Gastrocnemius medialis (tissue), 4 donors: ENCODE measurements at regions of chr13 and their contacts with region 1.

Region 1: DNA sequence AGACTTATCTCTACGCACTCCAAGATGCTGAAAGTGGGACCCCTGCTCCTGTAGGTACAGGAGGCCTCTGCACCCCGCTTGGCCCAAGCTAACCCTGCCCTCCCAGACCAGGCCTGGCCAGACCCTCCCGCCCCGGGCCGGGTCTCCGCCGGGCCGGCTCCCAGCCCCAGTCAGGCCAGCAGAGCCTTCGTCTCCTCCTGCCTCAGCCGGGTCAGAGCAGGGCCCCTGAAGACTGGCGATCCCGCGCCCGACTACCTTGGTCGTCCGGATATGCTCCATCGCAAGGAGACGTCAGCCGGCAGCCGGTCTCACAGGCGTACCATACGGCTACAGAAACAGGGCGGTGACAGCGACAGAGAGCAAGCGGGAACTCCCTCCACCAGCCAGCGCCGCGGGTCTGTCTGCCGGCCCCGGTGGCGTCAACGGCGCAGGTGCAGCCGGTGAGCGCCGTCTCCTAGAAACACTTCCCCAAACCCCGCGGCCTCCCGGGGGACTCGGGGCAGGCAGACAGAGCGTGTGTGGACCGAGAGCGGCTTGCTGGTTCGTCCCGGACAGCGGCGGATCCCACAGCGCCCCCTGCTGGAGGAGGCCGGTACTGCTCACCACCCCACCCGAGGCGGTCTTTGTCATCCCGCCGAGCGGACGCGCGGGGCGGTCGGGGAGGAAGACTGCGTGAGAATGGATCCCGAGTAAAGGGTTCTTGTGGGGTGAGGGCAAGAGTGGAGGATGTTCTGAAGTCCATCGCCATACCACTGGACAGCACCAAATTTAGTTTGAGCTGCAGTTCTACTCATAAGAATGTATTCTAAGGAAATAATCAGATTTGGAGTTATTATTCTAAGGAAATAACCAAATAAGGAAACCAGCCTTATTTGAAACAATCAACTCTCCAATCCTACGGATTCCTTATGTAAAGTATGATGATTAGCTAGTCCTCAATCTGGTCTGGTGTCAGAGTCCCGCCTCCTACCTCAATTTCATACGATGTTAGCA is at the start of gene MTMR6:
- DNase-seq: peak; percentile 80 to 87
- ATAC-seq: peak; percentile 93 to 96
- H3K4me3 ChIP-seq: peak within 1 kb of the TSS; percentile 81 to 98 (median 94)
- H3K27ac ChIP-seq: peak within 1 kb of the TSS; percentile 83 to 91 (median 90)
- H3K4me1 ChIP-seq: peaks cover 11 to 17% of the 10 kb centered on the region in 2 donors
- H3K27me3 ChIP-seq: peaks cover 0 to 4% (median 0%) of the 10 kb centered on the region in 3 donors
- CTCF ChIP-seq: peak; percentile 99 to 100 (median 99)
- POLR2A ChIP-seq: peak; percentile 47 to 53
- total RNA-seq, gene MTMR6: 17.5 to 25.1 (median 21.7) TPM

Region 2: GRCh38 chr13:24922745-24923591 is 364.3 kb before region 1 on chr13:
- in situ Hi-C with region 1: no loop called
- intact Hi-C with region 1: loop called (anchors 10 kb)
- DNase-seq: peak; percentile 93 to 95
- ATAC-seq: peak; percentile 96 to 97
- H3K4me3 ChIP-seq: peak overlapping the region; percentile 69 to 96 (median 83)
- H3K27ac ChIP-seq: peak overlapping the region; percentile 94 to 98 (median 94)
- H3K4me1 ChIP-seq: peaks cover 0 to 7% of the 10 kb centered on the region in 2 donors
- H3K27me3 ChIP-seq: no peaks in the 10 kb centered on the region
- CTCF ChIP-seq: peak in 2 of 5 experiments; percentile 35 to 41
- POLR2A ChIP-seq: peak; percentile 65 to 75

Region 3: GRCh38 chr13:25301347-25302047 is 14.2 kb after region 1 on chr13 and contains the start of gene NUP58:
- in situ Hi-C with region 1: no loop called
- intact Hi-C with region 1: loop called (anchors 1 kb)
- DNase-seq: peak; percentile 90 to 91
- ATAC-seq: peak; percentile 99
- H3K4me3 ChIP-seq: peak within 1 kb of the TSS; percentile 75 to 85 (median 78)
- H3K27ac ChIP-seq: peak within 1 kb of the TSS; percentile 87 to 90 (median 88)
- H3K4me1 ChIP-seq: peaks cover 11 to 12% of the 10 kb centered on the region in 2 donors
- H3K27me3 ChIP-seq: no peaks in the 10 kb centered on the region
- CTCF ChIP-seq: peak in 1 of 5 experiments; percentile 14
- POLR2A ChIP-seq: peak; percentile 74 to 84
- total RNA-seq, gene NUP58: 39.9 to 65.6 (median 56.9) TPM

Region 4: GRCh38 chr13:25319771-25320170 is 32.5 kb after region 1 on chr13:
- in situ Hi-C with region 1: no loop called
- intact Hi-C with region 1: no loop called
- DNase-seq: no peak
- ATAC-seq: no peak
- H3K4me3 ChIP-seq: no peak overlapping the region
- H3K27ac ChIP-seq: no peak overlapping the region
- H3K4me1 ChIP-seq: no peaks in the 10 kb centered on the region
- H3K27me3 ChIP-seq: no peaks in the 10 kb centered on the region
- CTCF ChIP-seq: no peak
- POLR2A ChIP-seq: no peak